ENCODE measurements at regions of chr6 and their contacts with region 1.

Region 1: GRCh38 chr6:90179190-90180169 is 117.2 kb downstream of the BACH2 start:
- DNase-seq: no peak
- ATAC-seq: no peak
- H3K4me3 ChIP-seq: no peak overlapping the region
- H3K27ac ChIP-seq: no peak overlapping the region
- H3K4me1 ChIP-seq: peaks cover 0 to 49% (median 37%) of the 10 kb centered on the region in 9 donors
- H3K27me3 ChIP-seq: no peaks in the 10 kb centered on the region
- CTCF ChIP-seq: peak in 8 of 9 donors; percentile 11 to 53 (median 38)

Region 2: DNA sequence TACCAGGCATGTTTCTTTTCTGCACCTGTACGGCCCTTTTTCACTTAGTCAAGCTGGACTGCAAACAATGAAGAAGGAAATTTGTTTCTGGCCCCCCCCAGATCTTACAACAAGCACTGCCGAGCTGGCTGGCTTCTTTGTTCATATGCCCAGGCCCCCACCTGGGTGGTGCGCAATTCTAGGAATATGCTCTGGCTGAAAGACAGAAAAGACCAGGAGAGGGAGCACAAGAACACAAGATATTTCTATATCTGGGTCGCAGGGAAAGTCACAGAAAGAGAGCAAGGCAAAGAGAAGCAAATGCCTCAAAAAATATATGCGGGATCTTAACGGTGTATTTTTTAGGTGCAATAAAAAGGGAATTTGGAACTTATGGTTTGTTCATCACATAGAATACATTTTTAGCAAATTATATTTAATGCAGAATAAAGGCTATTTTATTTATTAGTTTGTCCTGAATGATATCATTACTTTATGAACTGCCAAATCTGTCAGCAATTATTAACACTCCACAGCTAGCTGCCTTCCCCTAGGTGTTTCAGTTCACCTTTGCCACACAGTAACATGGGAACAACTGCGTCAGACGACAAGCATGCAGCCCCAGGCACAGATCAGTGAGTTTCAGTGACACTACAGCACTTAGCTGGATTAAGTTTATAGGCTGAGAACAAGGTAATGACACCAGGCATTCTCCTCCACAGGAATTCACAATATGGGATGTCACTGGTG is 208.7 kb before region 1 on chr6:
- intact Hi-C with region 1: loop called in 1 of 10 experiments (anchors 10 kb)
- DNase-seq: peak; percentile 18 to 48
- ATAC-seq: peak; percentile 24 to 90 (median 79)
- H3K4me3 ChIP-seq: no peak overlapping the region
- H3K27ac ChIP-seq: no peak overlapping the region
- H3K4me1 ChIP-seq: peaks cover 7 to 31% (median 21%) of the 10 kb centered on the region in 9 donors
- H3K27me3 ChIP-seq: no peaks in the 10 kb centered on the region
- CTCF ChIP-seq: peak in 8 of 9 donors; percentile 20 to 80 (median 68)

Region 3: GRCh38 chr6:90103056-90103800 is 76.3 kb before region 1 on chr6:
- intact Hi-C with region 1: loop called in 1 of 10 experiments (anchors 10 kb)
- DNase-seq: no peak
- ATAC-seq: no peak
- H3K4me3 ChIP-seq: no peak overlapping the region
- H3K27ac ChIP-seq: no peak overlapping the region
- H3K4me1 ChIP-seq: peaks cover 0 to 40% (median 9%) of the 10 kb centered on the region in 9 donors
- H3K27me3 ChIP-seq: no peaks in the 10 kb centered on the region
- CTCF ChIP-seq: no peak